ENCODE measurements at regions of chr17 and their contacts with region 1.

Region 1: GRCh38 chr17:36486204-36487194 is at the start of gene ZNHIT3:
- DNase-seq: peak; percentile 93 to 98
- H3K4me3 ChIP-seq: peak within 1 kb of the TSS; percentile 91
- CTCF ChIP-seq: no peak
- POLR2A ChIP-seq: no peak
- total RNA-seq, gene ZNHIT3: 29.6 to 56.7 (median 35.2) TPM

Region 2: GRCh38 chr17:35969558-35970380 is 516.7 kb before region 1 on chr17:
- intact Hi-C with region 1: loop called (anchors 10 kb)
- DNase-seq: peak; percentile 75 to 93
- H3K4me3 ChIP-seq: no peak overlapping the region
- CTCF ChIP-seq: no peak
- POLR2A ChIP-seq: no peak

Region 3: GRCh38 chr17:35981908-35982330 is 504.6 kb before region 1 on chr17:
- intact Hi-C with region 1: no loop called
- DNase-seq: peak in 1 of 2 donors; percentile 63
- H3K4me3 ChIP-seq: no peak overlapping the region
- CTCF ChIP-seq: no peak
- POLR2A ChIP-seq: no peak